ENCODE measurements at regions of chr2 and their contacts with region 1.

Region 1: GRCh38 chr2:44955593-44956392 is 14.3 kb downstream of the SIX3 start:
- DNase-seq: peak in 1 of 2 experiments; percentile 98
- H3K4me3 ChIP-seq: peak overlapping the region; percentile 2 to 53 (median 40); a peak in 7 of 8 replicates
- H3K27ac ChIP-seq: no peak overlapping the region
- H3K4me1 ChIP-seq: peaks cover 6 to 36% (median 18%) of the 10 kb centered on the region in 4 experiments
- H3K27me3 ChIP-seq: peaks cover 41 to 70% (median 61%) of the 10 kb centered on the region in 4 experiments
- CTCF ChIP-seq: peak in 2 of 3 experiments; percentile 93 to 96; a peak in 3 of 4 replicates
- EP300 ChIP-seq: no peak
- POLR2A ChIP-seq: no peak
- RAD21 ChIP-seq: peak; percentile 93 to 98

Region 2: DNA sequence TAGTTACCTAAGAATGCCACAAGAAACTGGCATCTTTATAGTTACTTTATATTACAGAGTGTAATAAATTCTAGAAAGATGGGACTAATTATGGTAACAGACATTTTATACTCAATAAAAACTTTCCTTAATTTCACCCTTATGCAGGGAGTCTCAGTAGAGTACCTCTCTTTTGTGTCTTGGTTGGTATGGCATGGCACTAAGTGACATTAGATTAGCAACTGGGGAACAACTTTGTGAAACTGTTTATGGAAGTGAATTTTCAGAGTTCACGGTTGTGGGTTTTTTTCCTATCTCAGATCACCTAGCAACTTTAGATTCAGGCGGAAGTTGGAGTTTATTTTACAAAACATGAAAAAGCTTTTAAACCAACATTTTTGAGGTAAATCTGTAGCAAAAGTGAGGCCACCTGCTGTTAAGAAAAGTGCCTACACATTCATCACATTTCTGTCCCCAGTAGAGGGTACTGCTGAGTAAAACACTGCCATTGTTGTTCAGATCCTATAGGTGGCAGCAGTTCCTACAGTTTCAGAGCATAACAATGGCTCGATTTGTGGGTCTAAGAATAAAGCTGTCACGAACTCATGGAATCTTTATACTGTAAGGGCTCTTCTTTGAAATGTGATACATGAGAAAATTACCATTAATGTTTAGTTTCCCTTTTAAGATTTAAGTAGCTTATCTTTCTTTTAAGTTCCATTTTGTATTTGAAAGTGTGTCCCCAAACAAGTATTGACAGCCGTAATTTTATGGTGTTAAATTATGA is 476.5 kb before region 1 on chr2:
- CTCF ChIA-PET with region 1: interaction called, 12 read pairs
- POLR2A ChIA-PET with region 1: no interaction called
- DNase-seq: peak in 1 of 2 experiments; percentile 5
- H3K4me3 ChIP-seq: no peak overlapping the region
- H3K27ac ChIP-seq: no peak overlapping the region
- H3K4me1 ChIP-seq: peaks cover 0 to 3% (median 1%) of the 10 kb centered on the region in 4 experiments; a peak in 1 of 7 replicates
- H3K27me3 ChIP-seq: peaks cover 0 to 1% (median 0%) of the 10 kb centered on the region in 4 experiments; a peak in 1 of 7 replicates
- CTCF ChIP-seq: peak in 2 of 3 experiments; percentile 100; a peak in 3 of 4 replicates
- EP300 ChIP-seq: no peak
- POLR2A ChIP-seq: no peak
- RAD21 ChIP-seq: peak; percentile 94 to 97

Region 3: DNA sequence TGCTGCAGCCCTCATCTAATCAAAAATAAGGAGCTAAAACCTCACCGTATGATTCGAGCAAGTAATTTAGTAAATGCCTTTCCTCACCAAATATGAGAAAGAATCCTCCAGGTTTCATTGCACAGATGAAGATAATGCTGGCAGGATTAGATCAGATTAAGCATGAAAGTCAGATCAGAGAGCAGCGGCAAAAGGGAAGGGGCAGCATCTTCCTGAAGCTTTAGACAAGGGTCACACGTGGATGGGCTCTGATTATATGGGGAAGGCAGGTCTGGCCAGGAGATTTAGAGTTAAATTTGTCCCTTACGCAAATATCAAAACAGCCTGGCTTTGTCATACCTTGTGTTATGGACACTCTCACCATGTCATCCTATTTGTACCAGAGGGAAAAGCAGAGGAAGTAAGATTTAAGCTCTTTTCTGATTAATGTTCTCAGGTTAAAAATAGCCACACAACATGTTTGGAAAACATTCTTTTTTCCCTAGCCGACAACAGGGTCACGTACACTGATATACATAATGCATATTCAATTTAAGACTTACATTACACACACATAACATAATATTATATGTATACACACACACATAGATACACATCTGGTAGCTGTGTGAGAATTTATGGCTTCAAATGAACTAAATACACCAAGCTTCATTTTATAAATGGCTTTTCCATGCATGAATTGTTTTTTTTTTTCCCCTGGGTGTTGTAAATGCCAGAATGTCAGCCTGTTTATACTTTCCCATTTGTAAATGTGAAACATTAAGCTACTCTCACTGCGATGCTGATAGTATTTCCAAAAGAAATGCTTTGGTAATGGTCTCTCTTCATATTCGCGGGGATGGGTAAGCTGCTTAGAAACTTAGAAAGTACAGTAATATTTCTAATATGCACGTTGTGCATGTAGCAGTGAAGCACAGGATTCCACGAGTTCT is 210.6 kb before region 1 on chr2:
- CTCF ChIA-PET with region 1: interaction called, 13 read pairs
- POLR2A ChIA-PET with region 1: no interaction called
- DNase-seq: no peak
- H3K4me3 ChIP-seq: no peak overlapping the region
- H3K27ac ChIP-seq: no peak overlapping the region
- H3K4me1 ChIP-seq: peaks cover 2 to 13% (median 7%) of the 10 kb centered on the region in 4 experiments; a peak in 4 of 7 replicates
- H3K27me3 ChIP-seq: no peaks in the 10 kb centered on the region
- CTCF ChIP-seq: no peak
- EP300 ChIP-seq: no peak
- POLR2A ChIP-seq: no peak
- RAD21 ChIP-seq: no peak

Region 4: DNA sequence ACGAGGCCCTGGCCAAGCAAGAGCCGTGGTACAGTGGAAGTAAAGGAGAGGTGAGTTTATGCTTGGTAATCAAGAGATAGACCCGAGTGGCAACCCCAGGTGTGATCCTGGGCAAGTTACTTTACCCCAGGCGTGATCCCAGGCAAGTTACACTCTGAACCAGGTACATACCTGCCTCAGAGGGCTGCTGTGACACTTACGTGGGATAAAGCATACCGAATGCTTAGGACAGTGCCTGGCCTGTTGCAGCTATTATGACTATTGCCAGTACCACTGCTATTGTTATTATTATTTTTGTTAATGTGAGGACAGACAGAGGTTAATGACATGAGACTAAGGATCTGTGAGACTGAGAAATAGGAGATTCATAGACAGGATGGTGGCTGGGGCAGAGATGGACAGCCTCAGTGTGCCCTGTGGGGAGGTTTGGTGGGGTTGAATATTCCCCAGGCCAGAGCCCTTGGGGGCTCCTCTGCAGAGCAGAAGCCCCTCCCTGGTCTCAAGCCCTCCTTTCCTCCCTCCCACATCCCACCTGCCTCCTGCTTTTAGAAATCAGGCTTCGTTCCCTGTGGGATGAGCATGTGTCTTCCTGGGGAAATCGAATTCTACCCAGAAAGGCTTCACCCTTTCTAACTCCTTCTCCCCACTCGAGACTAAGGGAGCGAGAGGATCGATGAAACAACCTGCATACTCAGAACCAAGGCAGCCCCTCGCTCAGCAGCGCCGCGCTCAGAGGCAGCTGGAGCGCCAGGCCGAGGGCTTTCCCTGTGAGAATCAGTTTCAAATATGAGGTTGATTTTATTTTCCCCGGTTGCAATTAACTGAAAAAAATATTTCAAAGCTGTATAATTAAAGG is 76.3 kb before region 1 on chr2:
- CTCF ChIA-PET with region 1: no interaction called
- POLR2A ChIA-PET with region 1: no interaction called
- DNase-seq: no peak
- H3K4me3 ChIP-seq: no peak overlapping the region
- H3K27ac ChIP-seq: no peak overlapping the region
- H3K4me1 ChIP-seq: peaks cover 0 to 8% (median 0%) of the 10 kb centered on the region in 4 experiments; a peak in 3 of 7 replicates
- H3K27me3 ChIP-seq: peaks cover 0 to 5% (median 1%) of the 10 kb centered on the region in 4 experiments; a peak in 3 of 7 replicates
- CTCF ChIP-seq: no peak
- EP300 ChIP-seq: no peak
- POLR2A ChIP-seq: no peak
- RAD21 ChIP-seq: no peak

Region 5: DNA sequence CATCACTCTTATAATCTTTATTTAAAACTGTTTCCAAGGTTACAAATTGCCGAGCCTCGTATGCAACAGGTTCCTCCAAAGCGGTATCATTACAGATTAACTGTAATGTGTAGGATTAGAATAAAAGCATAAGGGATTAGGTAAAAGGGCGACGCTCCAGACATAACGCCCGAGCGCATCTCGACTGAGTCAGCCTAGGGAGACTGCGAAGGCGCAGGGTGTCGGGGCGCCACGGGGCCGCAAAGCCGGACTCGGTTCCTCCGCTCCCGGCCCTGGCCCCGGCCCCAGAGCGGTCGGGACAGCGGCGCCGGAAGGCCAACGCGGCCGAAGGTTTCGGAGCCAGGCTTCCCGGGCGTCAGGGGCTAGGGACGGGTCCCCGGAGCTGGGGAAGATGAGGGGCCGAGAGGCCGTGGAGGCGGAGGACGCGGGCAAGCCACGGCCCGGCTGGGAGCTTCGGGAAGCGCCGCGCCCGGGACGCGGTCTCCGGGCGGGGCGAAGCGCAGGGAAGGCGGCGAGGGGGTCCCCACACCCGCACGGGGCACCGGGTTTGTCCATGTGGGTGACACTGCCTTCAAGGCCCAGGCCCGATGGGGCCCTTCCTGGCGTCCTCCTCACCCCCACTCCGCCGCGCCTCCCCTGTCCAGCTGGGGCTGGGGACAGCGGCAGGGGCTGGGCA is 27.2 kb before region 1 on chr2:
- CTCF ChIA-PET with region 1: interaction called, 28 read pairs
- POLR2A ChIA-PET with region 1: interaction called, 5 read pairs
- DNase-seq: no peak
- H3K4me3 ChIP-seq: peak overlapping the region; percentile 26 to 53 (median 34); a peak in 7 of 8 replicates
- H3K27ac ChIP-seq: no peak overlapping the region
- H3K4me1 ChIP-seq: peaks cover 15 to 37% (median 23%) of the 10 kb centered on the region in 4 experiments
- H3K27me3 ChIP-seq: peaks cover 63 to 98% (median 87%) of the 10 kb centered on the region in 4 experiments
- CTCF ChIP-seq: no peak
- EP300 ChIP-seq: no peak
- POLR2A ChIP-seq: no peak
- RAD21 ChIP-seq: no peak

Region 6: DNA sequence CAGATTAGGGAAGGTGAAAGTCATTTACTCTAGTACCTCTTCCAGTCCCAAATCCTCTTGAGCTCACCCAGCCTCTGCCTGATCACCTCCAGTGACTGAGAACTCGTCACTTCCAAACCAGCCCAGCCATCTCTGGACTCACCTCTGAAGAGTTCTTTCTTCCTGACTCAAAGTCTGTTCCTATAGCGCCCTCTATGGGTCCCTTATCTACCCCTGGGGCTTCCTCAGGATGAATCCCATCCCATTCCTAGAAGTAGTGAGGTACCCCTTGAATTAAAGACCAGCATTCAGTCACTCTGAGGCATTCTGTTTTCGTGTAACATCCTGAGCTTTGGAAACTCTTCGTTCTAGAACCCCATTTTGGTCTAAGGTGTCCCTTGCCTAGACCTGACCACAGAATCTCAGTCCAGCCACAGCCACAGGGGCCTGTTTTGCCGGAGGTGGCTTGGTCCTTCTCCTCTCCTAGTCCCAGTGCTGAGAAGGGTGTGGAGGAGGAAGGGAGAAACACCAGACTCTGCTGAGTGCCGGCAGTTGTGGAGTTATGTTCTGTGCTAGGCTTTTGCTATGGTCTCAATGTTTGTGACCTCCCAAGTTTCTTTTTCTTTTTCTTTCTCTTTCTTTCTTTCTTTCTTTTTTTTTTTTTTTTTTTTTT is 18.4 kb after region 1 on chr2:
- CTCF ChIA-PET with region 1: interaction called, 214 read pairs
- POLR2A ChIA-PET with region 1: interaction called, 3 read pairs
- DNase-seq: peak in 1 of 2 experiments; percentile 74
- H3K4me3 ChIP-seq: no peak overlapping the region
- H3K27ac ChIP-seq: no peak overlapping the region
- H3K4me1 ChIP-seq: peaks cover 2 to 19% (median 10%) of the 10 kb centered on the region in 4 experiments; a peak in 6 of 7 replicates
- H3K27me3 ChIP-seq: no peaks in the 10 kb centered on the region; a peak in 1 of 7 replicates
- CTCF ChIP-seq: peak in 2 of 3 experiments; percentile 81 to 84; a peak in 3 of 4 replicates
- EP300 ChIP-seq: no peak
- POLR2A ChIP-seq: no peak
- RAD21 ChIP-seq: peak; percentile 85 to 92